Activated B cell treated with CpG ODN at 0.5 μM for 24 hours (primary cell): ENCODE measurements at regions of chr15 and their contacts with region 1.

Region 1: DNA sequence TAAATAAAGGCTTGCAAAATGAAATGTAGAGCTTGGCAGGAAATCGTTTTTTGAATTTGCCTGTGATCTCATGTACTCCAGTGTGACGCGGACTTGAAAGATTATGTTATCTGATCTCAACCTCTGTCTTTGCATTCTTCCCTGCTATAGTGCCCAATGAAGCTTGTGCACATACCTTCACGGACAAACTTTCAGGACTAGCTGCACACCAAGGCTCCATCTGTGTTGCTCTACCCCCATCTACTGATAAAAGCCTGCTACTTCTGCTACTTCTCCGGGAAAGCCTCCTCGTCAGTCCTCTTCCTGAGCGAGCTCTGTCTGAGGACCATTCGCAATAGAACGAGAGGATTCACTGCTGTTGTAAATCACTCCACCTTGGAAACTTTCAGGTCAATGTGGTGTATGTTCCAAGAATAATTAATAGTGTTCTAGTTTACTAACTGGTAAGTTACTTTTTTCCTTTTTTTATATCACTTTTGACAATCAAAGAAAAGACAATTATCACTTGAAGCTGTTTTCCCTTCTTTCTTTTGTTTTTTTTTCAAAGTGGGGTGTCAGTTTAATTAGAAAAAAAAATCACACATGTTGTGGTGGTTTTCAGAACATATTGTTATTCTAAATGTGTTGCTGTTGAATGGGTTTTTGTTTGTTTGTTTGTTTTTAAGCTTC is 217.6 kb downstream of the ARRDC4 start:
- DNase-seq: no peak
- ATAC-seq: peak; percentile 21
- H3K4me3 Mint-ChIP-seq: no peak overlapping the region
- H3K27ac Mint-ChIP-seq: no peak overlapping the region
- H3K4me1 Mint-ChIP-seq: no peaks in the 10 kb centered on the region
- H3K27me3 Mint-ChIP-seq: peaks cover 6% of the 10 kb centered on the region
- CTCF ChIP-seq: no peak

Region 2: GRCh38 chr15:97960364-97961066 is 217.5 kb before region 1 on chr15 and contains the start of gene ARRDC4:
- CTCF ChIA-PET with region 1: no interaction called
- POLR2A ChIA-PET with region 1: no interaction called
- intact Hi-C with region 1: loop called (anchors 5 kb)
- DNase-seq: peak; percentile 88
- ATAC-seq: peak; percentile 94
- H3K4me3 Mint-ChIP-seq: peak within 1 kb of the TSS; percentile 80
- H3K27ac Mint-ChIP-seq: peak within 1 kb of the TSS; percentile 81
- H3K4me1 Mint-ChIP-seq: peaks cover 26% of the 10 kb centered on the region
- H3K27me3 Mint-ChIP-seq: peaks cover 3% of the 10 kb centered on the region
- CTCF ChIP-seq: no peak
- total RNA-seq, gene ARRDC4: 1.8 and 2.0 TPM in 2 replicates

Region 3: GRCh38 chr15:98202256-98202655 is 24.2 kb after region 1 on chr15:
- CTCF ChIA-PET with region 1: no interaction called
- POLR2A ChIA-PET with region 1: no interaction called
- intact Hi-C with region 1: no loop called
- DNase-seq: no peak
- ATAC-seq: no peak
- H3K4me3 Mint-ChIP-seq: no peak overlapping the region
- H3K27ac Mint-ChIP-seq: no peak overlapping the region
- H3K4me1 Mint-ChIP-seq: no peaks in the 10 kb centered on the region
- H3K27me3 Mint-ChIP-seq: no peaks in the 10 kb centered on the region
- CTCF ChIP-seq: no peak